K562 (cell line): ENCODE measurements at regions of chr11 and their contacts with region 1.

Region 1: GRCh38 chr11:117946842-117947526 is 17.8 kb upstream of the TMPRSS13 start:
- DNase-seq: peak; percentile 83 to 92 (median 90)
- ATAC-seq: peak; percentile 94
- H3K4me3 ChIP-seq: no peak overlapping the region
- H3K27ac ChIP-seq: no peak overlapping the region
- H3K4me1 ChIP-seq: peaks cover 20 to 41% of the 10 kb centered on the region in 2 experiments
- H3K27me3 ChIP-seq: no peaks in the 10 kb centered on the region
- CTCF ChIP-seq: peak; percentile 90 to 97 (median 96)
- EP300 ChIP-seq: peak; percentile 42; the same call in 1 of the 2 replicates
- POLR2A ChIP-seq: no peak
- RAD21 ChIP-seq: peak; percentile 93 to 96

Region 2: GRCh38 chr11:117426269-117426685 is 520.7 kb before region 1 on chr11:
- CTCF ChIA-PET with region 1: no interaction called
- POLR2A ChIA-PET with region 1: no interaction called
- in situ Hi-C with region 1: no loop called
- intact Hi-C with region 1: loop called (anchors 10 kb)
- DNase-seq: peak; percentile 76 to 84 (median 82)
- ATAC-seq: peak; percentile 87
- H3K4me3 ChIP-seq: no peak overlapping the region
- H3K27ac ChIP-seq: no peak overlapping the region
- H3K4me1 ChIP-seq: peaks cover 0 to 5% of the 10 kb centered on the region in 2 experiments; a peak in 3 of 5 replicates
- H3K27me3 ChIP-seq: peaks cover 33 to 73% of the 10 kb centered on the region in 2 experiments
- CTCF ChIP-seq: peak; percentile 87 to 97 (median 91)
- EP300 ChIP-seq: no peak
- POLR2A ChIP-seq: no peak
- RAD21 ChIP-seq: peak; percentile 64 to 85

Region 3: DNA sequence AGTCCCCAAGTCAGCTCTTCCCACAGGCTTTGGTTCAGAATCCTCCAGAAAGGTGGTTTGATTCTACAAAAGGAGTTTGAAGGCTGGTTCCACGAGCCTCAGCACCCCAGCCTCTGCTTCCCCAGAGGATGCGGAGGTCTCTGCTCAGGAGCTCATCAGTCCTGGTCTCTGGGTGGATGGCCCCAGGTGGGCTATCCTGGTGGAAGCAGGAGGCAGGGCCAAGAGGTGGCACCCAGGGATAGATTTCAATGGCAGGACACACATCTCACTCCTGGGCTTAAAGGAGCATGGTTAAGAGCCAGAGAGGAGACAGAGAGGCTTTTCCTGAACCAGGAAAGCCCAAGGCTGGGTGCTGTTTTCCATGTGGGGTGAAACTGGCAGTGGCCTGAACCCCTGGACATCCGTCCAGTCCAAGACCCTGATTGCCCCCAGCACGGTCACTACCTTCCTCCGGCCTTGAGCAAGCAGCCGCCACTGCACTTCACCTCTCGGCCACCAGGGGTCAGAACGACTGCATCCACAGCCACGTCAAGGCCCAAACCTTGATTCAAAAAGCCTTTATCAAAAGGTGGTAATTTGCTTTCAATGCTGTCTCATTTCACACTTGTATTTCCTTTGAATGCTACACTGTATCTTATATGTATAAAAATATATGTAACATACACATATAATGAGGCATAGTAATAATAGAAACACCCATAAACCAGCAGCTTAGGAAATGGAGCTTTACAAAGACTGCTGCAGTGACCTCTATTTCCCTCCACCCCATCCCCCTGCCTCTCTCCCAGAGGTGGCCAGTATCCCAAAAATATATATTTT is 103.1 kb before region 1 on chr11:
- CTCF ChIA-PET with region 1: interaction called, 15 read pairs
- POLR2A ChIA-PET with region 1: interaction called, 5 read pairs
- in situ Hi-C with region 1: loop called (anchors 10 kb)
- intact Hi-C with region 1: loop called (anchors 1 kb)
- DNase-seq: peak; percentile 70 to 79 (median 74)
- ATAC-seq: peak; percentile 94
- H3K4me3 ChIP-seq: no peak overlapping the region
- H3K27ac ChIP-seq: no peak overlapping the region
- H3K4me1 ChIP-seq: no peaks in the 10 kb centered on the region
- H3K27me3 ChIP-seq: peaks cover 0 to 35% of the 10 kb centered on the region in 2 experiments; a peak in 3 of 5 replicates
- CTCF ChIP-seq: peak; percentile 86 to 95 (median 94)
- EP300 ChIP-seq: no peak
- POLR2A ChIP-seq: no peak
- RAD21 ChIP-seq: peak; percentile 91 to 95

Region 4: DNA sequence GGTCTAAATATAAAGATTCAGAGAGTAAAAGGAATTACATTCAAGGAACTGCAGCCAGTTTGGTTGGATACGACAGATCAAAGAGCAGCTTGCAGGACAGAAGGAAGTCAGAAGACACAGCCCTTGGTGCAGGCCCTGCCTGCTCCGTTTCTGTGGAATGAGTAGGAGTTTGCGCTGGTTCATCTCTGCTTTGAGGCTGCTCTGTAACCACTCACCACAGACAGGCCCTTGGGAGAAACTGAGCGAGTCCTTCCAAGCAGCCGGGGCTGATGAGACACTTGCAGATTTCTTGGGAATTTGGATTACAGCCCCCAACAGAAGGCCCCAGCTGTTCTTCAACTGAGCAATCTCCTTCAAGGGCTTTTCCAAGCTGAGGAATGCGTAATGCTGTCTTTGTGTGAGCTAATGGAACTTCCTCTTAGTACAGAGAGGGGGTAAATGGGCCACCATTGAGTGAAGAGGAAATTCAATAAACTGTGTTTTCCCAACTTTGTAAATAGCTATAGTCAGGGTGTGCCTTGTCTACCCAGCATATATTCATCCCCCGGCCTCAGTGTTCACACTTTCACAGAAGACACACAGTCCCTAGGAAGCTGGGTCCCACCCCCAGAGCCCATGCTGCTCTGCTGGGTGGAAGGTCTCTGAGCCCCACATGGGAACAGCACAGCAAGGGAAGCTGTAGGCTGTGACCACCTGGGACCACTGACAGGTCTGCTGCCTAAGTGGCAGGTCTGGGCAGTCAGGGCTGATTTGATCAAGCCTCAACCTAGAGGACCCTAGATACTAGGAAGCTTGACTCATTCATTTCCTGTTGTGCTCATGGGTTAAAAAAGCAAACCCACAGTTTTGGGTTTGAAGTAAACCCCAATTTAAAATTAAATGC is 55.8 kb after region 1 on chr11:
- CTCF ChIA-PET with region 1: no interaction called
- POLR2A ChIA-PET with region 1: interaction called, 3 read pairs
- in situ Hi-C with region 1: no loop called
- intact Hi-C with region 1: loop called (anchors 2 kb)
- DNase-seq: peak; percentile 33 to 79 (median 51)
- ATAC-seq: peak; percentile 72
- H3K4me3 ChIP-seq: no peak overlapping the region
- H3K27ac ChIP-seq: peak overlapping the region; percentile 90
- H3K4me1 ChIP-seq: peaks cover 71 to 74% of the 10 kb centered on the region in 2 experiments
- H3K27me3 ChIP-seq: no peaks in the 10 kb centered on the region
- CTCF ChIP-seq: no peak
- EP300 ChIP-seq: no peak; the same call in 1 of the 2 replicates
- POLR2A ChIP-seq: peak; percentile 56; the same call in 1 of the 2 replicates
- RAD21 ChIP-seq: no peak

Region 5: GRCh38 chr11:118027691-118028090 is 80.7 kb after region 1 on chr11:
- CTCF ChIA-PET with region 1: no interaction called
- POLR2A ChIA-PET with region 1: no interaction called
- in situ Hi-C with region 1: no loop called
- intact Hi-C with region 1: no loop called
- DNase-seq: no peak
- ATAC-seq: peak; percentile 75
- H3K4me3 ChIP-seq: no peak overlapping the region
- H3K27ac ChIP-seq: no peak overlapping the region
- H3K4me1 ChIP-seq: no peaks in the 10 kb centered on the region
- H3K27me3 ChIP-seq: no peaks in the 10 kb centered on the region
- CTCF ChIP-seq: peak in 2 of 3 experiments; percentile 12 to 22; a peak in 1 of 6 replicates
- EP300 ChIP-seq: no peak
- POLR2A ChIP-seq: no peak
- RAD21 ChIP-seq: no peak

Region 6: DNA sequence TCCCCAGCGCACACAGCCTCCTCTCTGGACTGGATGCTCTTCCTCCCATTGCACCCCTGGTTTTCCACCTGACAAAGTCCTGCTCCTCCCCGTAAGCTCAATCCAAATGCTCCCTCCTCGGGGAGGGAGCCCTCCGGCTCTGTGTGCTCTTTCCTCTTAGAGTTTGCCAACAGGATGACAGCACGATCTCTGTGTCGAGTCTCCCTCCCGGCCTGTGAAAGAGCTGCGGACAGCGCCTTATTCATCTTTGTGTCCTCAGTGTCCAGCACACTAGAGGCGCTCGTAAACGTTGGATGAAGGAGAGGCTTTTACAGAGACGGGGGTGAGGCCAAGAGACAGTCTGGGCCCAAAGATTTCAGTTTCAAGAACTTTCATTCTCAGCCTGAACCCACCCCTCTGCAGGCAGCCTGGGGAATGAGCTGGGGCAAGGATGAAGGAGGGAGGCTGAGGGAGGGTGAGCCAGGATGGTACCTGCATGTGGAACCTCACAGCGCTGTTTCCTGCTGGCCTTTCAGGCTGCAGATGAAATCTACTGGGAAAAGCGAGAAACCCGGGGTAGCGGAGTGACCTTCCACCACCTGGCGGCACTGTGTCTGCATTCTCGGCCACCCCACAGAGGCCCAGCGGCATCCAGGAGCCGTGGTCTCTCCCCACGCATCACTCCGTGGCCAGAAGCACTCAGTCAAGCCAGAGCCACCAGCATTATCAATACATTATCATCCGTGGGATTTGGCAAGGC is 121.4 kb after region 1 on chr11:
- CTCF ChIA-PET with region 1: no interaction called
- POLR2A ChIA-PET with region 1: no interaction called
- in situ Hi-C with region 1: no loop called
- intact Hi-C with region 1: no loop called
- DNase-seq: peak; percentile 62 to 73 (median 63)
- ATAC-seq: peak; percentile 93
- H3K4me3 ChIP-seq: no peak overlapping the region
- H3K27ac ChIP-seq: no peak overlapping the region
- H3K4me1 ChIP-seq: peaks cover 12 to 15% of the 10 kb centered on the region in 2 experiments; a peak in 4 of 5 replicates
- H3K27me3 ChIP-seq: peaks cover 6 to 16% of the 10 kb centered on the region in 2 experiments; a peak in 4 of 5 replicates
- CTCF ChIP-seq: peak; percentile 74 to 83 (median 79)
- EP300 ChIP-seq: no peak
- POLR2A ChIP-seq: no peak
- RAD21 ChIP-seq: peak; percentile 43 to 78; a peak in 3 of 4 replicates

Region 7: DNA sequence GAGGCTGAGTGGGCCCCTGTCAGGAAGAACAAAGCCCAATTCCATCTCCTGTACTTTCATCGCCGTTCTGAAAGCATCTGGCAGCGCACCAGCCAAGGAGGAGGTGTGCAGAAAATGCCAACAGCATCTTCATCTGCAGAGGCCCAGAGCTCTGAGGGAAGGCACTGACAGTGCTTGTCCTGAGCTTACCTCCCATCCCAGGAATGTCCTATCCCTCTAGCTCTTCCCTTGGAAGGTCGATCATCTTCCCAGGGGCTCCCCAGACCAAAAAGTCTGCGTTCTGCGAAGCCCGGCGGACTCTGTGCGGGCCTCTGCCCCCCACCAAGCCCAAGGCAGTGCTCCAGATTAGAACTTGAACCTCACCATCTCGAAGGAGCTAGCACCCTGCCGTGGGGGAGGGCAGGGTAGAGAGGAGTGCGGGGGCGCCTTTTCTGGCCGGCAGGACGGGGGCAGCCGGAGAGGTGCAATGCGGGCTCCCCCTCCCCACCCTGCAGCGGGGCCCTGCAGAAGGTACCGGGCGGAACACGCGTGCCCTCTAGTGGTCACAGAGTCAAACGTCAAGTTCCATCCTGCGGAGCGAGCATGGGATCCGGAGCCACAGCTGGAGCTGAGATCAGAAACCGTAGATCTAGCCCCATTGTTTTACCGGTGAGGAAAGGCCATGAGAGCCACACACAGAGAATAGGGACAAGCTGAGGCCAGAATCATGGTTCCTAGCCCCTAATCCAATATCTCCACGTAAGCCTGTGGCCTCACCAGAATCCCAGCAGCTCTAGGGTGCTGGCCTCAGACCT is 224.5 kb after region 1 on chr11:
- CTCF ChIA-PET with region 1: no interaction called
- POLR2A ChIA-PET with region 1: interaction called, 3 read pairs
- in situ Hi-C with region 1: no loop called
- intact Hi-C with region 1: loop called (anchors 10 kb)
- DNase-seq: peak; percentile 80 to 90 (median 87)
- ATAC-seq: peak; percentile 94
- H3K4me3 ChIP-seq: no peak overlapping the region
- H3K27ac ChIP-seq: no peak overlapping the region
- H3K4me1 ChIP-seq: peaks cover 0 to 8% of the 10 kb centered on the region in 2 experiments; a peak in 2 of 5 replicates
- H3K27me3 ChIP-seq: peaks cover 33 to 83% of the 10 kb centered on the region in 2 experiments
- CTCF ChIP-seq: peak; percentile 85 to 88 (median 87)
- EP300 ChIP-seq: no peak
- POLR2A ChIP-seq: no peak
- RAD21 ChIP-seq: peak; percentile 78 to 88